ENCODE measurements at regions of chr6 and their contacts with region 1.

Region 1: GRCh38 chr6:152552616-152553209 is 84.4 kb downstream of the SYNE1 start:
- DNase-seq: peak; percentile 38
- H3K4me3 ChIP-seq: no peak overlapping the region
- H3K27ac ChIP-seq: no peak overlapping the region
- H3K4me1 ChIP-seq: no peaks in the 10 kb centered on the region
- H3K27me3 ChIP-seq: no peaks in the 10 kb centered on the region
- CTCF ChIP-seq: peak; percentile 80

Region 2: GRCh38 chr6:152296648-152297376 is 255.9 kb before region 1 on chr6:
- CTCF ChIA-PET with region 1: no interaction called
- POLR2A ChIA-PET with region 1: interaction called, 13 read pairs
- intact Hi-C with region 1: no loop called
- DNase-seq: no peak
- H3K4me3 ChIP-seq: no peak overlapping the region
- H3K27ac ChIP-seq: no peak overlapping the region
- H3K4me1 ChIP-seq: no peaks in the 10 kb centered on the region
- H3K27me3 ChIP-seq: no peaks in the 10 kb centered on the region
- CTCF ChIP-seq: no peak

Region 3: DNA sequence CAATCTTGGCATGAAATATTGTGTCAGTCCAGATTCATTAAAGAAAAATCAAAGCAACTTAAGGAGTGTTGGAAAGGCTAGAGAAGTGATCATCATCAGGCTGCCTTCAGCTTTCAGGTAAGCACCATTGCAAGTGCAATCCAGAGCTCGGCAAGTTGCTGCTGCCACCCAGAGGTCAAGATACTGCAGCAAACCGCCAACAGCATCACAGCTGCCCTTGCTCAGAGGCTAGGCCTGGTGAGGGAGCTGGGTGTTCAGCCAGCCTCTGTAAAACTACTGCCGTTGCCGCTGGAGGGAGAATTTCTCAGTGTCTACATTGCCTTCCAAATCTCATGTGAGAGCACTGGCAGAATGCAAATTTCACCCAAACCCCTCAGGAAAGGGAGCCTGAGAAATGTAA is 90.3 kb after region 1 on chr6:
- CTCF ChIA-PET with region 1: interaction called, 3 read pairs
- POLR2A ChIA-PET with region 1: no interaction called
- intact Hi-C with region 1: loop called (anchors 1 kb)
- DNase-seq: peak in 1 of 2 experiments; percentile 19
- H3K4me3 ChIP-seq: no peak overlapping the region
- H3K27ac ChIP-seq: no peak overlapping the region
- H3K4me1 ChIP-seq: no peaks in the 10 kb centered on the region
- H3K27me3 ChIP-seq: no peaks in the 10 kb centered on the region
- CTCF ChIP-seq: peak; percentile 47; the same call in 1 of the 2 replicates

Region 4: GRCh38 chr6:152669895-152670294 is 117.2 kb after region 1 on chr6:
- CTCF ChIA-PET with region 1: interaction called, 3 read pairs
- POLR2A ChIA-PET with region 1: no interaction called
- intact Hi-C with region 1: loop called (anchors 1 kb)
- DNase-seq: no peak
- H3K4me3 ChIP-seq: no peak overlapping the region
- H3K27ac ChIP-seq: no peak overlapping the region
- H3K4me1 ChIP-seq: no peaks in the 10 kb centered on the region
- H3K27me3 ChIP-seq: no peaks in the 10 kb centered on the region
- CTCF ChIP-seq: peak; percentile 50

Measured in PC-9 (cell line).